ENCODE measurements at regions of chr11 and their contacts with region 1.

Region 1: DNA sequence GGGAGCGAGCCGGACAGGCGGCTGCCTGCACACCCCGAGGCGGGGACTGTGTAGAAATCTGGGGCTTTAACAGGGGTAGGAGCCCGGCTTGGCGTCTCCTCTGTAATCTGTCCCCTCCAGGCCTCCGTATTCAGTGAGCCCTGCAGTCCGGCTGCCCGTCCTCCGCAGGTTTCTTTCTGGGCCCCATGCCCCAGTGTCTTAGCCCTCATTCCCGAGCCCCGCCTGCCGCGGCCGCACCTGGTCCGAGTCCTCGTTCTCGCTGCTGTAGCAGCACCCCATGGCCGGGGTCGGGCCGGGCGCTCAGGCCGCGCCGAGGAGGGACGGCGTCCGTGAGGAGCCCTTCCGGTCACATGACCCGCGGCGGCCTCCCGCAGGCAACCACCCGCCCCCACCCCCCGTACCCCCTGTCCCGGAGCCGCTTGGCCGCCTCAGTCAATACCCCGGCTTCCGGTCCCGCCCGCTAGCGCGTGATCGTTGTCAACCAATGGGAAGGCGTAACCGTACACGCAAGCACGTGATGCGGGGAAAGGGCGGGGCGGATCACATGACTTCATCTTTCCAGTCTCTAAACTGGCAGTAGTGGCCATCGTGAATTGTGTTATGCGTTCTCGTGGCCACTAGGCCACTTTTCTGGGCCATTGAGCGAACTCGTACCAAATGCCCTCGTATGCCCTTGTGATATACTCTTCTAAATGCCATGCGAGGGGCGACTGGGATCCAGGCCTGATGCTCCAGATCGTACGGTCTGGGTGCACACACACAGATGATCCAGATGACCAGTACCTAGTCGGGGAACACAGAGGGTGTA is at the start of gene LAMTOR1:
- DNase-seq: peak; percentile 99
- H3K4me3 Mint-ChIP-seq: peak within 1 kb of the TSS; percentile 87
- H3K27ac Mint-ChIP-seq: peak within 1 kb of the TSS; percentile 84
- H3K4me1 Mint-ChIP-seq: peaks cover 40% of the 10 kb centered on the region
- H3K27me3 Mint-ChIP-seq: no peaks in the 10 kb centered on the region
- total RNA-seq, gene LAMTOR1: 72.7 to 76.9 TPM

Region 2: GRCh38 chr11:72080256-72080974 is 22.7 kb before region 1 on chr11 and contains the starts of genes LRRC51 and NUMA1:
- CTCF ChIA-PET with region 1: no interaction called
- POLR2A ChIA-PET with region 1: interaction called, 22 read pairs
- DNase-seq: peak; percentile 100
- H3K4me3 Mint-ChIP-seq: peak within 1 kb of the TSS; percentile 88
- H3K27ac Mint-ChIP-seq: peak within 1 kb of the TSS; percentile 90
- H3K4me1 Mint-ChIP-seq: peaks cover 58% of the 10 kb centered on the region
- H3K27me3 Mint-ChIP-seq: no peaks in the 10 kb centered on the region
- total RNA-seq, gene LRRC51: 5.9 to 7.1 TPM
- total RNA-seq, gene NUMA1: 200 to 201 TPM

Region 3: GRCh38 chr11:72091005-72091691 is 12.0 kb before region 1 on chr11:
- CTCF ChIA-PET with region 1: interaction called, 20 read pairs
- POLR2A ChIA-PET with region 1: interaction called, 18 read pairs
- DNase-seq: peak; percentile 66
- H3K4me3 Mint-ChIP-seq: no peak overlapping the region
- H3K27ac Mint-ChIP-seq: no peak overlapping the region
- H3K4me1 Mint-ChIP-seq: peaks cover 18% of the 10 kb centered on the region
- H3K27me3 Mint-ChIP-seq: no peaks in the 10 kb centered on the region

Region 4: GRCh38 chr11:72162888-72163492 is 59.8 kb after region 1 on chr11:
- CTCF ChIA-PET with region 1: no interaction called
- POLR2A ChIA-PET with region 1: no interaction called
- DNase-seq: no peak
- H3K4me3 Mint-ChIP-seq: no peak overlapping the region
- H3K27ac Mint-ChIP-seq: no peak overlapping the region
- H3K4me1 Mint-ChIP-seq: no peaks in the 10 kb centered on the region
- H3K27me3 Mint-ChIP-seq: peaks cover 23% of the 10 kb centered on the region

Measured in activated CD4-positive, alpha-beta memory T cell treated with anti-CD3 and anti-CD28 coated beads, Interleukin-2, amount 10 ng/mL, durations not matched to agents 7 days and 5 days (primary cell).